Left cardiac atrium (tissue), 4 donors: ENCODE measurements at regions of chr5 and their contacts with region 1.

Region 1: DNA sequence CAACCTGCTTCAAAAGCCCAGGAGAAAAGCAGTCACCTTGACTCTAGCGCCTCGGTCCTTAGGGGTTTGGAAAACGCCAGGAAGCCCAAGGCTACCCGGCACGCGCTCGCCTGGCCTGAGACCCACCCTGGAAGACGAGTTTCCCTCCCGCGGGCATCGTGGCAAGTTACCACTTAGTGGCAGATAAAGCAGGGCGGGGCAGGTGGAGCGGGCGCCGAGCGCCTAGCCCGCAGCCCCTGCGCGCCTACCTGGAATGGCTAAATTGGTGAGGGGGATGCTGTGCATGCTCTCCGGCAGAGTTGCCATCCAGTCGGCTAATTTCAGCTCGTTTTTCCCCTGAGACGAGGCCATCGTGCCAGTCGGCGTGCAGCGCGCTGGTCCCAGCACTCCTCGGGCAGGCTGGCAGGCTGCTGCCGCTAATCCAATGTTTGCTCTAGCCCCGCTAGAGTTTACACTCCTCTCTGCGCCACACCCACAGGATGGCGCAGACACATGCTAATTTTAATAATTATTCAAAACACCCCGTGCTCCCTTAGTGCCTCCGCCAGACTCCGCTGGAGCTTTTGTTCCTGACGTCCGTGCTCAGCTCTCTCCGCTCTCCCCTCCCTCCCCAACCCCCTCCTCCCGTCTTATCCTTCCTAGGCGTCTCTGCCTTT is at the start of gene PLCXD3:
- DNase-seq: peak; percentile 67
- ATAC-seq: peak; percentile 90 to 93
- total RNA-seq, gene PLCXD3: 25.2 to 39.6 TPM

Region 2: DNA sequence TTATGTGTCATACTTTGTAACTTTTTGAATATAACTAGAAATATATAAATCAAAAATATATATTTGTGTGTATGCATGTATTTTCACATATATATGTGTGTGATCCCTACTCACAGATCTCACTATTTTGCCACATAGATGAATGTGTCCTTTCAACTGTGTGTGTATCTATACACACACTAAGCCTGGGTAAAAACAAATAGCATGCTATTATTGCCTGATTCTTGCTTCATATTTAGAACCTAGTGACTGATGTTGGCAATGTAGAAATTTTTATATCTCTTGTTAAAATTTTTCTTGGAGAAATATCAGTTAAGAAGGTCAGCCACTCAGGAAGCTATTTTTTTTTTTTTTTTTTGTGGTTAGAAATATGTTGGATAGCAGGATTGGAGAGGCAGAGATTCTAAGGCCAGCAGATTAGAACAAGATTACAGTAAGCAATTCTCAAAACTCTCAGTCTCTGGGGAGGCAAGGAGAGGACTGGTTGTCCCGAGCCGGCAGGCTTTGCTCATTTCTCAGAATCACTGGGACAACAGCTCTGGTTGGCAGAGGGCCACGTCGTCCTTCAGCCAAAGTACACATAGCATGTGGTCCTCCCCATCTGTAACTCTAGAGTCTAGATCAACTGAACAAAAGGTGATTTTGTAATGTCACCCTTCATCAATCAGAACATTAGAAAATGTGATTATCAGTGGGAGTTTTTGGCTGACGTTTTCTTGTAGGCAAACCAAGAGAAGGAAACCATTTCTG is 316.7 kb before region 1 on chr5:
- intact Hi-C with region 1: loop called in 1 of 2 experiments (anchors 10 kb)
- DNase-seq: peak; percentile 99
- ATAC-seq: peak; percentile 97 to 98